ENCODE measurements at regions of chr18 and their contacts with region 1.

Region 1: GRCh38 chr18:48872234-48873145 is 78.3 kb downstream of the SMAD7 start:
- DNase-seq: no peak
- ATAC-seq: no peak
- H3K4me3 ChIP-seq: no peak overlapping the region
- H3K27ac ChIP-seq: peak overlapping the region; percentile 73 to 81
- H3K4me1 ChIP-seq: peaks cover 0 to 5% of the 10 kb centered on the region in 2 donors
- H3K27me3 ChIP-seq: no peaks in the 10 kb centered on the region

Region 2: DNA sequence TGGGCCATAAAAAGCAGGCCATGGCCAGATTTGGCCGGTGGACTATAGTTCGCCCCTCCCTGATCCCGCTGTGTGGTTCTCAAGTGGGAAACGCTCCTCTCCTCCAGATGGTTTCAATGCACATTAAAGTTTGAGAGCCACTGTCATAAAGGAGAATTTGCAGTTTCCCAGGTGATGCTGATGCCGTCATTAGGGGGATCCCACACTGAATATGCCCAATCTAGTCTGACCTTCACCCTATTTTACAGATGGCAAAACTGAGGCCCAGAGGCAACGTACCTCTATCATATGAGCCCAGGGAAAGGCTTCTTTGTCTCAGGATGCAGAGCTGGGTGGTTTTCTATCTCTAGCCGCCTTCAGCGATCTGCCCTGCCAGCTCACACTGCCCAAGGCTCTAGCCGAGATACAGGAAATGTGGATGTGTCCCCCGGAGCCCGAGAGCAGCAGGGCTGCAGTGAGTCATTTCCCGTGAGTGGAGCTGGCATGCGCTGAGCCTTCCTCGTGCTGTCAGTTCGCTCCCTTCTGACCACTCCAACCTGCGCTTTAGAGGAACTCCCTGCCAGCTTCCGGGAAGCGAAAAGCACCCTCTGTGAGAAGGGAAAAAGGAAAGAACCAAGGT is 38.0 kb before region 1 on chr18:
- intact Hi-C with region 1: loop called in 1 of 2 experiments (anchors 5 kb)
- DNase-seq: peak; percentile 93 to 96
- ATAC-seq: peak; percentile 76
- H3K4me3 ChIP-seq: no peak overlapping the region
- H3K27ac ChIP-seq: no peak overlapping the region
- H3K4me1 ChIP-seq: peaks cover 0 to 4% of the 10 kb centered on the region in 2 donors
- H3K27me3 ChIP-seq: no peaks in the 10 kb centered on the region

Region 3: DNA sequence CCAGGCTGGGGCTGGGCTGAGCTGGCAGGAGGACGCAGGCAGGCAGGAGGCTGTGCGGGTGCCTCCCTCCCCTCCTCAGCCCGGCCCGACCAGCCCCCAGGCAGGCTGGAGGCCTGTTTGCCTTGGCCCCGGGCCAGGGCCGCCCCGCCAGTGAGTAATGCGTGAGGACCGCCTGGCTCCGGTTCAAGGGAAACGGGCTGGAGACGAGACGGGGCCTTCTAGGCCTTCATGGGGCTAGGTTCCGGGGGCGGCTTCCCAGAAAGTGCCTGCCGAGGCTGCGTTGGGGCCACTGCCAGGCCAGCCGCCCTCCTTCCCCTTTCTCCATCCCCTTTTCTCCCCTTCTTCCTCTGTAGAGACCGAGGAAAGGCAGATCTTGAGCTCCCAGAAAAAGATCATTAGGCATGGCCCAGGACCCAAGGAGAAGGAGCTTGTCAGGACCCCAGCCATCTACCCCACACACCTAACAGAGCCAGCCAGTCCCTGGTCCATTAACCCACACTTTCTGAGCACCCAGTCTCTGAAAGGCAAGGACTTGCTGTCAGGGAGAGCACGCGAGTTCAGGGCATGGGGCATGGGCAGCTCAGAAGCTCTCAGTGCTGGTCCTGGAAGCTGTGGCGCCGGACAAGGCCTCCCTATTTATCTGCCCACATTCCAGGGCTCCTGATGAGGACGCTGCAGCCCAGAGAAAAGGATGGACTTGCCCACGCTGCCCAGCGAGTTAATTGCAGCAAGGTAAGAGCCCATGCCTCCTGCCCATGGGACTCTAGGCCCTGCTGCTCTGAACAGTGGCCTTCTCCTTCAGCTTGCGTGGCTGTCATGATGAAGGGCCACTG is 29.7 kb after region 1 on chr18:
- intact Hi-C with region 1: loop called in 1 of 2 experiments (anchors 1 kb)
- DNase-seq: peak; percentile 98
- ATAC-seq: peak; percentile 93
- H3K4me3 ChIP-seq: no peak overlapping the region
- H3K27ac ChIP-seq: peak overlapping the region; percentile 80 to 84
- H3K4me1 ChIP-seq: peaks cover 3 to 5% of the 10 kb centered on the region in 2 donors
- H3K27me3 ChIP-seq: no peaks in the 10 kb centered on the region

Region 4: DNA sequence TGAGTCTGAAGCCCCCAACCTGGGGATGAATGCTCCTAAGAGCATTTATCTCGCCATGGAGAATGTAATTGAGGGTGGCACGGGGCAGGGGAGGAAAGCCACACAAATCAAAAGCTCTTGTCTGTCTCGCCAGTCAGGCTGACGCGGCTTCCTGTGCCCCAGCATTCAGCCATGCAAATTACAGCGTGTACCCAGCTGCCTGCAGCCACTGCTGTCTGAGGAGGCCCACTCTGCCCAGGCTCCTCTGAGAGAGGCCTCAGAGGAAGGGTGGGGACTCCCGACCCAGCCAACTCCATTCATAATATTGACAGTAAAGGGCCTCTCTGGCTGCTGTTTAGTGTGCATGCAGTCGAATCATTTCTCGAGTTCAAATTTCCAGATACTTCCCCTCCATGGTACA is 56.3 kb after region 1 on chr18:
- intact Hi-C with region 1: loop called in 1 of 2 experiments (anchors 2 kb)
- DNase-seq: peak; percentile 87
- ATAC-seq: peak; percentile 63
- H3K4me3 ChIP-seq: no peak overlapping the region
- H3K27ac ChIP-seq: peak overlapping the region; percentile 17 to 49
- H3K4me1 ChIP-seq: peaks cover 3% of the 10 kb centered on the region in 2 donors
- H3K27me3 ChIP-seq: no peaks in the 10 kb centered on the region

Region 5: DNA sequence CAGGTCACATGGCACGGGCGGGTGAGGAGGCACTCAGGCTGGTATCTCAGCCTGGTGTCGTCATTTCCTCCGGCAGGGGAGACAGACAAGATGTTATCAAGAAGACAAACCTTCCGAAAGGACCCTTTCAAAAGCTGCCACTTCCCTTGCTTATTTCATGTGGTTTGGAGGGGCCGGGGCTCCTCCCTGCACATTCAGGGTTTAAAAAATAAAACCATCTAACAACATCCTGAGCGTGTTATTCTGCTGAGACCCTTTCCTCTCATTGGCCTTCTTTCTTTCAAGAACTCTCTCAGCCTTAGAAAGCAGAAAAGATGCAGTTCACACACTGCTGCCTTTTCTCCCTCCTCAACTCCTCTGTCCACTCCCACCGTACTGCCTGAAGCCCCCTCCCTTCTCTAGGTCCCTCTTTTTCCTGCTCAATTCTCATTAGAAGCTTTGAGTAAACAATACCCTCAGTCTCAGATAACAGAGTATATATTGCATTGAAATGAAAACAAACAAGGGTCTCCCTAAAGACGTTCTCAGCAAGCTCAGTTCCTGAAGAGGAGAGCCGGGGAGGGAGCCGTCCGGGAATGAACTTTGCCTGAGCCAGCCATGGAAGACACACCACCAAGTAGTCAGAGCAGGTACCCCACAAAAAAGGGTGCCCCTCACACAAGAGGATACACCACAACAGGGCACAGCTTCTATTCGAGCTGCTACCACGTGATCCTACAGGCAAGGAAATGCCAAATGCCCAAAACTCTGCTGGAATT is 68.5 kb after region 1 on chr18:
- intact Hi-C with region 1: no loop called
- DNase-seq: no peak
- ATAC-seq: no peak
- H3K4me3 ChIP-seq: no peak overlapping the region
- H3K27ac ChIP-seq: peak overlapping the region; percentile 61 to 83
- H3K4me1 ChIP-seq: peaks cover 2 to 6% of the 10 kb centered on the region in 2 donors
- H3K27me3 ChIP-seq: no peaks in the 10 kb centered on the region

Region 6: DNA sequence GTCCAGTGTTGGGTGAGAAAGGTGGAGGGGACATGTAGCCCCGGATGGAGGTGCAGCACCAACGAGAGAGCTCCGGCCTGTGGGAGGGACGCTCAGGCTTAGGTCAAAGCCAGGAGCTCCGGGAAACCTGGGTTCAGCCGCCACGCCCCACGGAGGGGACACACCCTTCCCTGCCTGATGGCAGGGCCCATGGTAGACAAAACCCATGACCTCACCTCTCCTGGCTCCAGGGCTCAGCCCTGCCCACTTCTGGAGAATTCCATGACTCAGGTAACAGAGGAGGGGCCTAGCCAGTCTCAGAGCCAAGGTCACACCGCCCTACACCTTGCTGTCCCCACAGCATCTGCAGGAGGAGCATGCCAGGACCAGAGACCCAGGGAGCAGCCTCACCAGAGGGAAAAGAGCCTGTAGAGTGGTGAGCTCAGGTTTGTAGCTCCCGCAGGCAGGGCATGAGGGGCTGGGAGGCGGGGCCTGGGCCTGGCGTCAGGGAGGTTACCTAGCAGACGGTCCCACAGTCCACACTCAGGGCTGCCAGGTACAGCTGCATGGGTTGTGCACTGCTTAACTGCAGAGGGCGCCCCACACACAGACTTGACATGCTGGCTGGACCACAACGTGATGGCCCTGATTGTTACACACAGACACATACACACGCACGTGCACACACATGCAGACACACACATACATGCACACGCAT is 149.1 kb after region 1 on chr18:
- intact Hi-C with region 1: no loop called
- DNase-seq: no peak
- ATAC-seq: no peak
- H3K4me3 ChIP-seq: no peak overlapping the region
- H3K27ac ChIP-seq: no peak overlapping the region
- H3K4me1 ChIP-seq: no peaks in the 10 kb centered on the region
- H3K27me3 ChIP-seq: no peaks in the 10 kb centered on the region